Posterior cingulate gyrus (tissue), 11 donors: ENCODE measurements at regions of chr17 and their contacts with region 1.

Region 1: DNA sequence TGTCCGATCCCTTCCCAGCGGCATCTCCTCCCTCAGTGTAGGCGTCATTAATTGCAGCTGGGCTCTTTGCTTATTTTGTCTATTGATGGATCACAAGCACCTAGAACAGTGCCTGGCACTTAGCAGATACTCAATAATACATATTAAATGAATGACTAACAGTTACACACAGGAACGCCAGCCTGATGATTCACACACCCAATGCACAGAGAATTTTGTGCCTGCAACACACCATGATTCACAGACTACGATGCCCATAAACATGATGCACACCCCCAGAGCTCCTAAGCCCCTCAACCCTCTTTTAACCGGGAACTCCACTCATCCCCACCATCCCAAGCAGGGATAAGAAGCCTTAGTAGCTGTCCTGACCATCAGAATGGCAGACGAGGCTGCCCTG is 66.6 kb upstream of the TMEM97 start:
- DNase-seq: no peak

Region 2: GRCh38 chr17:27760069-27760885 is 492.2 kb before region 1 on chr17:
- intact Hi-C with region 1: loop called (anchors 5 kb)
- DNase-seq: peak; percentile 47 to 93 (median 74)

Region 3: GRCh38 chr17:27805520-27806146 is 446.8 kb before region 1 on chr17:
- intact Hi-C with region 1: loop called (anchors 5 kb)
- DNase-seq: peak; percentile 70 to 97 (median 86)

Region 4: DNA sequence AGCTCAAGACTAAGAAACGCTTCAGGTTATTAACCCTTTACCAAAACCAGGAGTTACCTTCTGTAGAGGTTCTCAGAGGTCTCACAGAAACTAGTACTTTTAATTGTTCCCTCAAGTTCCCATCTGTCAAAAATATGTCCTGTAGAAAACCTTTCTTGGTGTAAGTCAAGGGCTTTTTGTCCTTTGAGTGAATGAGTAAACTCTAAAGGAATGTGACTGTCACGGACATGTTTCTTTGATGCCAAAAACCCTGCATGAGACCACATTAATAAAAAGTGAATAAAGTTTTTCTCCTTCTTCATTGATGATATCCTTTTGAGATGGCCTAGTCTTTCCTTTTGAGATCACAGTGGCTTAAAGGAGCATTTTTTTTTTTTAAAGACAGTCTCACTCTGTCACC is 107.1 kb before region 1 on chr17:
- intact Hi-C with region 1: no loop called
- DNase-seq: no peak